Activated CD8-positive, alpha-beta T cell treated with anti-CD3 and anti-CD28 coated beads for 36 hours (primary cell): ENCODE measurements at regions of chr5 and their contacts with region 1.

Region 1: DNA sequence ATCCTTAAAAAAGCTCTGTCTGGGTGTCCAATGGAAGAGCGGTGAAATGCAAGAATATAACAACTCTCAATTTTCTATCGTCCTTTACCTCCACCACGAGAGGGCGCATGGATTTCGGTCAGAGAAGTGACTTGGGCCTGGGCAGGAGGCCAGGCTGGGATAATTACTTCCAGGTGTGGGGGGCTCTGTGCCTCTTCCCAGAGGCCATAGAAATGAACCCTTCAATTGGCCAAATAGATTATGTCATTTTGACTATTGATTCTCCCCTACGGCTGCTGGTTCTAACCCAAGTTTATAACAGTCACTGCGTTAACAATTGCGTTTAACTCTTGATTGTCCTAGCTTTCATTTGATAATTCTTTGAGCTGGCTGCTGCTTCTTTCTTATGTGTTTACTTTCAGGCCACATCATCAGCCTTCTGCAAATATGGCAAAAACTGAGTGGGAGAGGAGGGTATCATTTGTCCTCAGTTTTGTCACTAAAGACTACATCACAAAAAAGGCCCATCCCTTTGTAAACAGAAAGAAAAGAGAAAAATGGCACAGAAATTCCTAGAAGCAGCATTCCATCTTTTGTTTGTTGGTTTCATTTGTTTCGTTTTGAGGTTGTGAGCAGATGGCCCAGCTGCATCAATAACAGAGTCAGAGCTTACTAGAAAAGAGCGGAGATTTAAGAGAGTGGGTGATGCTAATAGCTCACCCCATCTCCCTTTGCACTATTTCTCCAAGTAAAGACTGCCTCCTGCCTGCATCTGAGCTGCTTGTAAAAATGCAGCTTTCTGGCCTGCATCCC is 45.4 kb upstream of the ZFR start:
- DNase-seq: peak; percentile 76
- ATAC-seq: peak; percentile 76
- H3K4me3 Mint-ChIP-seq: no peak overlapping the region
- H3K27ac Mint-ChIP-seq: no peak overlapping the region
- H3K4me1 Mint-ChIP-seq: no peaks in the 10 kb centered on the region
- H3K27me3 Mint-ChIP-seq: no peaks in the 10 kb centered on the region
- CTCF ChIP-seq: peak; percentile 93

Region 2: GRCh38 chr5:32355686-32356085 is 134.3 kb before region 1 on chr5:
- CTCF ChIA-PET with region 1: no interaction called
- POLR2A ChIA-PET with region 1: no interaction called
- intact Hi-C with region 1: no loop called
- DNase-seq: no peak
- ATAC-seq: no peak
- H3K4me3 Mint-ChIP-seq: no peak overlapping the region
- H3K27ac Mint-ChIP-seq: no peak overlapping the region
- H3K4me1 Mint-ChIP-seq: peaks cover 4% of the 10 kb centered on the region
- H3K27me3 Mint-ChIP-seq: no peaks in the 10 kb centered on the region
- CTCF ChIP-seq: no peak

Region 3: GRCh38 chr5:32462618-32463017 is 27.4 kb before region 1 on chr5:
- CTCF ChIA-PET with region 1: interaction called, 13 read pairs
- POLR2A ChIA-PET with region 1: no interaction called
- intact Hi-C with region 1: no loop called
- DNase-seq: peak; percentile 74
- ATAC-seq: peak; percentile 99
- H3K4me3 Mint-ChIP-seq: no peak overlapping the region
- H3K27ac Mint-ChIP-seq: peak overlapping the region; percentile 91
- H3K4me1 Mint-ChIP-seq: peaks cover 13% of the 10 kb centered on the region
- H3K27me3 Mint-ChIP-seq: peaks cover 1% of the 10 kb centered on the region
- CTCF ChIP-seq: no peak

Region 4: DNA sequence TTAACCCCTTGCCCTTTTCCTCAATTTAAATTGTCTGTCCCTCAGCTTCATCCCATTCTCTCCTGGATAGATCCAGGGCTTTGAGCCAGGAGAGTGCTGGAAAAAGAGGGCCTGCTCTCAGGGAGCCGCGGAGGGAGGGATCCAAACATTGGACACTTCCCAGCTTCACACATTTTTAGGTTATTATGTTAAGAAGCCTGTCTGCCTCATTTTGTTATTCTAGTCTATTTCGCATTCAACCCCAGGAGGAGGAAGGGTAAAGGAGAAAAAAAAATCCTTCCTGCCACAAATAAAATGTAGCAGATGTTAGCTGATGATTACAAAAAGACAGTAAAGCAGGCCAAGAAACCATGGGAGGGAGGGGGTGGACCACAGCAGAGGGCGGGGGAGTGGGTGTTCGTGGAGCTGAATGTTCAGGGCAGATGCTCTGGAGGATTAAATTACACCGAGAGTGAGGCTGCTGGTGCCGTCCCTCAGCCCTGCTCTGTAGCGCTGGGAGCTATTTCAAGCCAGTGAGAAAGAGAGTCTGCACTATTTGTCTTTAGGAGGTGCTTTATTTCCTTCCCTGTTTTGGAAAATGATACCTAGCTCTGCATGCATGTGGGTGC is 15.1 kb after region 1 on chr5:
- CTCF ChIA-PET with region 1: interaction called, 26 read pairs
- POLR2A ChIA-PET with region 1: no interaction called
- intact Hi-C with region 1: no loop called
- DNase-seq: no peak
- ATAC-seq: no peak
- H3K4me3 Mint-ChIP-seq: no peak overlapping the region
- H3K27ac Mint-ChIP-seq: no peak overlapping the region
- H3K4me1 Mint-ChIP-seq: peaks cover 8% of the 10 kb centered on the region
- H3K27me3 Mint-ChIP-seq: peaks cover 8% of the 10 kb centered on the region
- CTCF ChIP-seq: no peak

Region 5: DNA sequence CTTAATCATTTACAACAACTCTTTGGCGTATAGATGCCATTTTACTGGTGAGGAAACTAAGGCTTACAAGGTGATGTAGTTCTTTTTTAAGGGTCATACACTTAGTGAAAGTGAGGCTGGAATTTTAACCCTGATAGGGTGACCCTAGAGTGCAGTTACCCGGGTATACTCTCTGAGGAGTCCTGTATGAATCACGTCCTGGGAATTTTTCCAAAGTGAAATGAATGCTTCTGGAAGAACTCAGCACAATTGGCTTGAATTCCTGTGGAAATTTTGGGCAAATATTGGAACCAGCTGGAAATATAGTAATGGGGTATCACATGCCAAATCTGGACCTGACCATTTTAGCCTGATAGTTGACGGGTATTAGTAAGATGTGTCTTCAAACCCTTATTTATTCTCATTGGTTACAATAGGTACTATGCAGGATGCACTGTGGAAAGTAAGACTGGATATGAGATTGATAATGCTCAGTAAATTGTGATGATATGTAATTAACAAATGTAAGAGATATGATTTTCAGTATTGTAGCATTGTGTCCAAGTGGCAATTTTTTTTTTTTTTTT is 110.2 kb after region 1 on chr5:
- CTCF ChIA-PET with region 1: interaction called, 13 read pairs
- POLR2A ChIA-PET with region 1: no interaction called
- intact Hi-C with region 1: no loop called
- DNase-seq: no peak
- ATAC-seq: no peak
- H3K4me3 Mint-ChIP-seq: no peak overlapping the region
- H3K27ac Mint-ChIP-seq: no peak overlapping the region
- H3K4me1 Mint-ChIP-seq: peaks cover 41% of the 10 kb centered on the region
- H3K27me3 Mint-ChIP-seq: no peaks in the 10 kb centered on the region
- CTCF ChIP-seq: no peak

Region 6: GRCh38 chr5:32621256-32621655 is 131.3 kb after region 1 on chr5:
- CTCF ChIA-PET with region 1: interaction called, 17 read pairs
- POLR2A ChIA-PET with region 1: no interaction called
- intact Hi-C with region 1: no loop called
- DNase-seq: no peak
- ATAC-seq: no peak
- H3K4me3 Mint-ChIP-seq: no peak overlapping the region
- H3K27ac Mint-ChIP-seq: no peak overlapping the region
- H3K4me1 Mint-ChIP-seq: no peaks in the 10 kb centered on the region
- H3K27me3 Mint-ChIP-seq: no peaks in the 10 kb centered on the region
- CTCF ChIP-seq: no peak